MCF 10A (cell line): ENCODE measurements at regions of chr12 and their contacts with region 1.

Region 1: DNA sequence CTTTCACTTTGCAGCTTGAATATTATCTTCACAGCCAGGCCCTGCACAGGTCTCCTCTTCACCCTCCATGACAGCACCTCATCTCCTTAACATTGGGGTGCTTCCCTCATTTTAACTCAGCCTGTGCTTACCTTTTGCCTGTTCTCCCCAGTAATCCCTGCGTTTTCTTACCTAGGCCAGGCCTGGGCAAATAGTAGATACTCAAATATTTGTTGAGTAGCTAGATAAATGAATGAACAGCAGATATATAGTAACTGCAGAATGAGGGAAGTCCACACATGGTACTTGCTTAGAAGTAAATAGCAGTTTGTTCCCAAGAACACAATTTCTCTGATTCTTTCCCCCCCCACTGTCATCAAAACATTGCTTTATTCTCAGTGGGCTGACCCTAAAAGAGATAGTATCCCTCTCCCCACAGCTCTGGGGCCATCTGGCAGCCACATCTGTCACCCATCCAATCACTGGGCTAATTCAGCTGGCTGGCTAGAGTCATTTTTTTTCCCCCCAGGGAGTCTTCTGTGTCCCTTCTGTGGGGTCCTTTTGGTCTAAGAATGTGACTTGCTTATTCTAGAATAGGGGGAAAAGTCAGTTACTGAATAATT is 43.2 kb downstream of the APPL2 start:
- DNase-seq: no peak
- H3K4me3 Mint-ChIP-seq: no peak overlapping the region
- H3K27ac Mint-ChIP-seq: no peak overlapping the region
- H3K4me1 Mint-ChIP-seq: no peaks in the 10 kb centered on the region
- H3K27me3 Mint-ChIP-seq: no peaks in the 10 kb centered on the region
- CTCF ChIP-seq: no peak

Region 2: GRCh38 chr12:104641862-104642261 is 550.9 kb before region 1 on chr12:
- CTCF ChIA-PET with region 1: no interaction called
- POLR2A ChIA-PET with region 1: no interaction called
- intact Hi-C with region 1: loop called (anchors 10 kb)
- DNase-seq: no peak
- H3K4me3 Mint-ChIP-seq: no peak overlapping the region
- H3K27ac Mint-ChIP-seq: no peak overlapping the region
- H3K4me1 Mint-ChIP-seq: peaks cover 6% of the 10 kb centered on the region
- H3K27me3 Mint-ChIP-seq: no peaks in the 10 kb centered on the region
- CTCF ChIP-seq: no peak

Region 3: DNA sequence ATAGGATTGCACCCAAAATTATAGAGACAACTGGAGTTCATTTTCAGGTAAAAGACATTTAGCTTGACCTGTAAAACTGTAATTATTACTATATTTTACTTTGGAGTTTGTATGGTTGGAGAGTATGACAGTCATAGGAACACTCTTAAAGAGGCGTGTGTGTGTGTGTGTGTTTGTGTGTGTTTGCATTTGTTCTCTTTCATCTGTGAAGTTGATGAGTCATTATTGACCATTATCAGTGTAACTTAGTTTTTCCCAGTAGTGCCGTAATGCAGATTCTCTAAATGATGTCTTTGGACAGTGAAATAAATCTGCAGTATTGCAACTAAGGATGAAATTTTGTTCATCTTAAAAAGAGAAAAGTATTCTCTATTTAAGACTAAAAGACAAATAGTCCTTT is 72.2 kb before region 1 on chr12:
- CTCF ChIA-PET with region 1: no interaction called
- POLR2A ChIA-PET with region 1: no interaction called
- intact Hi-C with region 1: no loop called
- DNase-seq: peak; percentile 4
- H3K4me3 Mint-ChIP-seq: no peak overlapping the region
- H3K27ac Mint-ChIP-seq: no peak overlapping the region
- H3K4me1 Mint-ChIP-seq: no peaks in the 10 kb centered on the region
- H3K27me3 Mint-ChIP-seq: no peaks in the 10 kb centered on the region
- CTCF ChIP-seq: no peak